Ascending aorta (tissue), 2 donors: ENCODE measurements at regions of chr4 and their contacts with region 1.

Region 1: DNA sequence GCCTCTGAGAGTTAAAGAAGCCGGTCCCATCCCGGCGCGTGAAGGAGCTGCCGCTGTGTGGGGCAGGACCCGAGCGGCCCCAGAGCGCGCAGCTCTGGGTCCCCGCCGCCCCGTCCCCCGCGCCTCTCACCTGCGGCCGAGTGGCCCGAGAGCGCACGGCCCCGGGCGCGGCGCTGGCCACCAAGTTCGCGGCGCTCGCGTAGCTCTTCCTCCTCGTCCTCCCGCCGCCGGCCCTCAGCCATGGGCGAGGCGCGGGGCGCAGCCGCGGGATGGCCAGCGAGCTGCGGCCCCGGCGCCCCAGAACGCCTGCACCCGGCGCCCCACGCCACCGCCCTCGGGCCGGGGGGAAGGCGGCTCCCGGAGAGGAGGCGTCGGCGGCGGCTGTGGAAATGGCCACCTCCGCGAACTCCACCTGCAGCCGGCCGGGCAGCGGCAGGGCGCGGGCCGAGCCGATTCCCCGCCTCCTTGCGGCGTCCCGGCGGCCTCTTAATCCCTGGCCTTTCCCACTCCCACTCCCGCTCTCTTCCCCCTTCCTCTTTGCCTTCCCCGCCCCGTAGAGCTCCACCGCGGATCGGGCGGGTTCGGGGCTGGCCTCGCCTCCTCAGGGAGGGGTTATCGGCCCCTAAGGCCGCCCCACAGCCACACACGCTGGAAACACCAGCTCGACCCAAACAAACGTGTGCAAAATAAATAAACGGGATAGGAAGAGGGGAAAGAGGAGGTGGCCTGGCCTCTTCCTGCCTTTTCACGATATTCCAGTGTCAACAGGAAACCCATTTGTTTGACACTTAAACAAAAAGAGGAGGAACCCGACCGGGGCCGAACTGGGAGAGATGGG is at the start of gene SH3D19:
- DNase-seq: peak in 1 of 2 donors; percentile 83
- H3K4me3 ChIP-seq: peak within 1 kb of the TSS; percentile 82 to 85
- H3K27ac ChIP-seq: peak within 1 kb of the TSS; percentile 92
- H3K4me1 ChIP-seq: no peaks in the 10 kb centered on the region
- H3K27me3 ChIP-seq: no peaks in the 10 kb centered on the region
- CTCF ChIP-seq: no peak
- total RNA-seq, gene SH3D19: 110 TPM

Region 2: GRCh38 chr4:151227731-151228130 is 97.6 kb before region 1 on chr4:
- intact Hi-C with region 1: loop called (anchors 2 kb)
- DNase-seq: peak; percentile 18 to 84
- H3K4me3 ChIP-seq: peak overlapping the region; percentile 44 to 56
- H3K27ac ChIP-seq: peak overlapping the region; percentile 85
- H3K4me1 ChIP-seq: peaks cover 0 to 10% of the 10 kb centered on the region in 2 donors
- H3K27me3 ChIP-seq: no peaks in the 10 kb centered on the region
- CTCF ChIP-seq: no peak

Region 3: DNA sequence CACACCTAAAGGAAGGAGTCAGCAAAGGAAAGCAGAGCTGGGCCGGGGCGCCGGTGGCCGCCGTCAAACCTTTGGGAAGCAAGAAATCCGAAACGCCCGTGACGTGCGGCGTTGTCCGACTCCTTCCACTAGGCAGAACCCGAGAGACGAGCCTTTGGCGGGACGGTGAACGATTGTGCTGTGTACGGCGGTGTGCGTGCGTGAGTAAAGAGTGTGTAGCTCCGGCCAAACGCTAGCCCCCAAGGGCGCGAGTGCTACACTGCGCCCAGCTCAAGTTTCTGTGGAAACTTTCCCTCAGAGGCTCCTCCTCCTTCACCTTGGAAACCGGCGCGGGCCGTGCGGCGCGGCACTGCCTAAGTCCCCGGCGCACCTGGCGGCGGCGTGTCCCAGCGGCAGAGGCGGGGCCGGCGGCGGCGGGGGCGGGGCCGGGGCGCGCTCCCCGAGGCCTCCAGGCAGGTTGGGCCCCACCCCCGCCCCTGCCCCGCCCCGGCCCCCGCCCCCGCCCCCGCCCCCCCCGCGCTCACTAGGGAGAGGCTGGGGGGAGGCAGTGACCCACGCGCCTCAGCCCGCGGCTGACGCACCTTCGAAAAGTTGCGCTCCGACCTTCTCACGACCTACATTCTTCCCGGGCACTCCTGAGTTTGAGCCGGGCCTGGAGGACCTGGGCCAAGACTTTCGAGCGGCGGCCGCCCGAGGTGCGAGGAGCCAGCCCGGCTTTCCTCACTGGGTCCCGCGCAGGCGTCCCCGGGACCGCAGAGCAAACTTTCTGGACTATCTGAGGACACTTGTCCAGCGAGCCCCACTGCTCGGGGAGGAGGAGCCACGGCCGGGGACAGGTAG is 83.5 kb after region 1 on chr4 and contains the start of gene FHIP1A:
- intact Hi-C with region 1: loop called (anchors 5 kb)
- DNase-seq: peak; percentile 10 to 85
- H3K4me3 ChIP-seq: peak within 1 kb of the TSS; percentile 72 to 78
- H3K27ac ChIP-seq: peak within 1 kb of the TSS; percentile 42 to 43
- H3K4me1 ChIP-seq: peaks cover 0 to 5% of the 10 kb centered on the region in 2 donors
- H3K27me3 ChIP-seq: no peaks in the 10 kb centered on the region
- CTCF ChIP-seq: no peak
- total RNA-seq, gene FHIP1A: not detected